T-cell (primary cell): ENCODE measurements at regions of chr20 and their contacts with region 1.

Region 1: GRCh38 chr20:36133821-36134220 is 20.7 kb upstream of the EPB41L1 start:
- DNase-seq: no peak
- ATAC-seq: no peak
- H3K4me3 ChIP-seq: no peak overlapping the region
- H3K4me3 Mint-ChIP-seq: no peak overlapping the region
- H3K27ac ChIP-seq: no peak overlapping the region
- H3K27ac Mint-ChIP-seq: no peak overlapping the region
- H3K4me1 ChIP-seq: no peaks in the 10 kb centered on the region
- H3K4me1 Mint-ChIP-seq: no peaks in the 10 kb centered on the region
- H3K27me3 ChIP-seq: peaks cover 0 to 2% of the 10 kb centered on the region in 2 experiments
- H3K27me3 Mint-ChIP-seq: peaks cover 4% of the 10 kb centered on the region in 2 donors

Region 2: GRCh38 chr20:35292376-35293285 is 841.2 kb before region 1 on chr20 and contains the start of gene FAM83C:
- CTCF ChIA-PET with region 1: no interaction called
- POLR2A ChIA-PET with region 1: interaction called in 1 of 2 experiments, 10 read pairs
- DNase-seq: no peak
- ATAC-seq: no peak
- H3K4me3 ChIP-seq: no peak within 1 kb of the TSS
- H3K4me3 Mint-ChIP-seq: no peak within 1 kb of the TSS
- H3K27ac ChIP-seq: no peak within 1 kb of the TSS
- H3K27ac Mint-ChIP-seq: no peak within 1 kb of the TSS
- H3K4me1 ChIP-seq: no peaks in the 10 kb centered on the region
- H3K4me1 Mint-ChIP-seq: no peaks in the 10 kb centered on the region
- H3K27me3 ChIP-seq: peaks cover 0 to 30% of the 10 kb centered on the region in 2 experiments
- H3K27me3 Mint-ChIP-seq: peaks cover 4 to 12% of the 10 kb centered on the region in 2 donors
- total RNA-seq, gene FAM83C: 0.15 TPM in 1 of 5 donors, not detected in the others